ENCODE measurements at regions of chr6 and their contacts with region 1.

Region 1: GRCh38 chr6:30326526-30327260 is at the start of gene TRIM39:
- DNase-seq: peak; percentile 73
- ATAC-seq: peak; percentile 67
- H3K4me3 ChIP-seq: peak within 1 kb of the TSS; percentile 95
- H3K27ac ChIP-seq: peak within 1 kb of the TSS; percentile 87
- H3K4me1 ChIP-seq: peaks cover 37% of the 10 kb centered on the region
- H3K27me3 ChIP-seq: no peaks in the 10 kb centered on the region
- CTCF ChIP-seq: no peak
- total RNA-seq, gene TRIM39: 17.9 and 24.8 TPM in 2 replicates

Region 2: GRCh38 chr6:30219244-30219643 is 107.4 kb before region 1 on chr6:
- CTCF ChIA-PET with region 1: interaction called, 3 read pairs
- POLR2A ChIA-PET with region 1: no interaction called
- intact Hi-C with region 1: loop called (anchors 2 kb)
- DNase-seq: peak; percentile 78
- ATAC-seq: peak; percentile 80
- H3K4me3 ChIP-seq: no peak overlapping the region
- H3K27ac ChIP-seq: no peak overlapping the region
- H3K4me1 ChIP-seq: no peaks in the 10 kb centered on the region
- H3K27me3 ChIP-seq: no peaks in the 10 kb centered on the region
- CTCF ChIP-seq: peak; percentile 89

Region 3: GRCh38 chr6:30272017-30272416 is 54.7 kb before region 1 on chr6:
- CTCF ChIA-PET with region 1: no interaction called
- POLR2A ChIA-PET with region 1: no interaction called
- intact Hi-C with region 1: no loop called
- DNase-seq: peak; percentile 43
- ATAC-seq: no peak
- H3K4me3 ChIP-seq: no peak overlapping the region
- H3K27ac ChIP-seq: no peak overlapping the region
- H3K4me1 ChIP-seq: no peaks in the 10 kb centered on the region
- H3K27me3 ChIP-seq: no peaks in the 10 kb centered on the region
- CTCF ChIP-seq: no peak

Region 4: GRCh38 chr6:30541515-30542403 is 215.1 kb after region 1 on chr6:
- CTCF ChIA-PET with region 1: no interaction called
- POLR2A ChIA-PET with region 1: no interaction called
- intact Hi-C with region 1: no loop called
- DNase-seq: peak; percentile 95
- ATAC-seq: peak; percentile 65
- H3K4me3 ChIP-seq: peak overlapping the region; percentile 68
- H3K27ac ChIP-seq: no peak overlapping the region
- H3K4me1 ChIP-seq: peaks cover 18% of the 10 kb centered on the region; the same call in 1 of the 2 replicates
- H3K27me3 ChIP-seq: no peaks in the 10 kb centered on the region
- CTCF ChIP-seq: peak; percentile 98